CD4-positive, alpha-beta memory T cell (primary cell): ENCODE measurements at regions of chr14 and their contacts with region 1.

Region 1: GRCh38 chr14:89767861-89768268 is 186.7 kb downstream of the EFCAB11 start:
- DNase-seq: peak; percentile 64 to 69 (median 67)
- H3K4me3 ChIP-seq: no peak overlapping the region
- H3K4me3 Mint-ChIP-seq: peak overlapping the region in 4 of 8 donors; percentile 51 to 62 (median 60)
- H3K27ac ChIP-seq: no peak overlapping the region
- H3K27ac Mint-ChIP-seq: peak overlapping the region in 2 of 7 donors; percentile 2 to 56
- H3K4me1 ChIP-seq: peaks cover 9% of the 10 kb centered on the region
- H3K4me1 Mint-ChIP-seq: peaks cover 13 to 32% (median 25%) of the 10 kb centered on the region in 4 donors
- H3K27me3 ChIP-seq: no peaks in the 10 kb centered on the region
- H3K27me3 Mint-ChIP-seq: peaks cover 0 to 2% of the 10 kb centered on the region in 2 donors

Region 2: GRCh38 chr14:89027097-89027740 is 740.6 kb before region 1 on chr14:
- CTCF ChIA-PET with region 1: no interaction called
- POLR2A ChIA-PET with region 1: no interaction called
- intact Hi-C with region 1: loop called (anchors 5 kb)
- DNase-seq: peak; percentile 46 to 65 (median 57)
- H3K4me3 ChIP-seq: peak overlapping the region; percentile 17 to 42
- H3K4me3 Mint-ChIP-seq: peak overlapping the region; percentile 52 to 76 (median 68)
- H3K27ac ChIP-seq: no peak overlapping the region
- H3K27ac Mint-ChIP-seq: no peak overlapping the region
- H3K4me1 ChIP-seq: peaks cover 11% of the 10 kb centered on the region
- H3K4me1 Mint-ChIP-seq: peaks cover 5 to 13% (median 9%) of the 10 kb centered on the region in 4 donors
- H3K27me3 ChIP-seq: peaks cover 15% of the 10 kb centered on the region
- H3K27me3 Mint-ChIP-seq: peaks cover 41 to 52% of the 10 kb centered on the region in 2 donors

Region 3: GRCh38 chr14:89040460-89041259 is 727.2 kb before region 1 on chr14:
- CTCF ChIA-PET with region 1: interaction called, 15 read pairs
- POLR2A ChIA-PET with region 1: no interaction called
- intact Hi-C with region 1: no loop called
- DNase-seq: peak; percentile 67 to 74 (median 68)
- H3K4me3 ChIP-seq: no peak overlapping the region
- H3K4me3 Mint-ChIP-seq: peak overlapping the region; percentile 53 to 85 (median 78)
- H3K27ac ChIP-seq: no peak overlapping the region
- H3K27ac Mint-ChIP-seq: no peak overlapping the region
- H3K4me1 ChIP-seq: peaks cover 11% of the 10 kb centered on the region
- H3K4me1 Mint-ChIP-seq: peaks cover 4 to 9% (median 7%) of the 10 kb centered on the region in 4 donors
- H3K27me3 ChIP-seq: peaks cover 5% of the 10 kb centered on the region
- H3K27me3 Mint-ChIP-seq: peaks cover 12 to 14% of the 10 kb centered on the region in 2 donors

Region 4: DNA sequence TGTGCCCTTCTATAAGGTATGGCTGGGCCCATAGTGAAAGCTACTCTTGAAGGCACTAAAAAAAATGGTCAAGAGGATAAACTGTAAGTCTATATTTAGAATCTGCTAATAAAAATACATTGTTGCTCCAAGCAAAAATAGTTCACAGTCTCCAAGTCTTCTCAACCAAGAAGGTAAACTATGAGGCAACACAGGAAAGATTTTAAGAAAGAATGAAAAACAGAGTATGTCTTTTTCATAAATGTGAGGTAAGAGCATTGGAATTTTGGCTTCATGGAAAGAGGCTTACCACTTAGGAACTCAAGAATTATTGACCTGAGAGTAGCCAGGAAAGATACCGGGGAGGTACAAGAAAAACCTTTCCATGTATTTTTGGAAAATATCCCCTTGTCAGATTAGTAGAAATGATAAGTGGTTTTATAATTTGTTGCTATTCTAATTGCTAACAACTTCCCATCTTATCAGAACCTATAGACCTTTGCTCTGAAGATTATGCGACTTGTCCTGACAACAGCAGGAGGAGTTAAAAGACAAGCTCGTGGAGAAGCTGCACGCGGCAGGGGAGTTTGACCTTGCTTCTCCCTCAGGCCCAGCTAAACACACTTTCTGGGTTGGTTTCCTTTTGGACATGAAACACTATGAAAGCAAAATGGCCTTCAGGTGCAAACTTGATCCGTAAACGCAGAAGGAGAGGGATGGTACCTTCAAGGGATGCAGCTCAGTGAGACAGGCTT is 588.9 kb before region 1 on chr14:
- CTCF ChIA-PET with region 1: interaction called, 15 read pairs
- POLR2A ChIA-PET with region 1: no interaction called
- intact Hi-C with region 1: loop called (anchors 1 kb)
- DNase-seq: no peak
- H3K4me3 ChIP-seq: no peak overlapping the region
- H3K4me3 Mint-ChIP-seq: no peak overlapping the region
- H3K27ac ChIP-seq: no peak overlapping the region
- H3K27ac Mint-ChIP-seq: peak overlapping the region in 2 of 7 donors; percentile 25 to 38
- H3K4me1 ChIP-seq: peaks cover 5% of the 10 kb centered on the region
- H3K4me1 Mint-ChIP-seq: peaks cover 10 to 32% (median 23%) of the 10 kb centered on the region in 4 donors
- H3K27me3 ChIP-seq: no peaks in the 10 kb centered on the region
- H3K27me3 Mint-ChIP-seq: no peaks in the 10 kb centered on the region

Region 5: GRCh38 chr14:89336338-89336737 is 431.5 kb before region 1 on chr14:
- CTCF ChIA-PET with region 1: interaction called, 3 read pairs
- POLR2A ChIA-PET with region 1: no interaction called
- intact Hi-C with region 1: loop called (anchors 5 kb)
- DNase-seq: no peak
- H3K4me3 ChIP-seq: no peak overlapping the region
- H3K4me3 Mint-ChIP-seq: no peak overlapping the region
- H3K27ac ChIP-seq: no peak overlapping the region
- H3K27ac Mint-ChIP-seq: peak overlapping the region in 2 of 7 donors; percentile 36 to 67
- H3K4me1 ChIP-seq: no peaks in the 10 kb centered on the region
- H3K4me1 Mint-ChIP-seq: peaks cover 15 to 43% (median 22%) of the 10 kb centered on the region in 4 donors
- H3K27me3 ChIP-seq: no peaks in the 10 kb centered on the region
- H3K27me3 Mint-ChIP-seq: no peaks in the 10 kb centered on the region

Region 6: GRCh38 chr14:89509891-89510290 is 258.0 kb before region 1 on chr14:
- CTCF ChIA-PET with region 1: no interaction called
- POLR2A ChIA-PET with region 1: no interaction called
- intact Hi-C with region 1: loop called (anchors 2 kb)
- DNase-seq: no peak
- H3K4me3 ChIP-seq: no peak overlapping the region
- H3K4me3 Mint-ChIP-seq: peak overlapping the region in 7 of 8 donors; percentile 84 to 92 (median 89)
- H3K27ac ChIP-seq: peak overlapping the region; percentile 46
- H3K27ac Mint-ChIP-seq: peak overlapping the region; percentile 88 to 98 (median 96)
- H3K4me1 ChIP-seq: peaks cover 37% of the 10 kb centered on the region
- H3K4me1 Mint-ChIP-seq: peaks cover 38 to 70% (median 52%) of the 10 kb centered on the region in 4 donors
- H3K27me3 ChIP-seq: no peaks in the 10 kb centered on the region
- H3K27me3 Mint-ChIP-seq: no peaks in the 10 kb centered on the region